Heart right ventricle (tissue), 16 donors: ENCODE measurements at regions of chr18 and their contacts with region 1.

Region 1: GRCh38 chr18:36203360-36203895 is 16.1 kb downstream of the MOCOS start:
- DNase-seq: no peak
- ATAC-seq: no peak
- H3K4me3 ChIP-seq: no peak overlapping the region
- H3K27ac ChIP-seq: no peak overlapping the region
- H3K4me1 ChIP-seq: no peaks in the 10 kb centered on the region
- H3K27me3 ChIP-seq: no peaks in the 10 kb centered on the region
- CTCF ChIP-seq: no peak

Region 2: DNA sequence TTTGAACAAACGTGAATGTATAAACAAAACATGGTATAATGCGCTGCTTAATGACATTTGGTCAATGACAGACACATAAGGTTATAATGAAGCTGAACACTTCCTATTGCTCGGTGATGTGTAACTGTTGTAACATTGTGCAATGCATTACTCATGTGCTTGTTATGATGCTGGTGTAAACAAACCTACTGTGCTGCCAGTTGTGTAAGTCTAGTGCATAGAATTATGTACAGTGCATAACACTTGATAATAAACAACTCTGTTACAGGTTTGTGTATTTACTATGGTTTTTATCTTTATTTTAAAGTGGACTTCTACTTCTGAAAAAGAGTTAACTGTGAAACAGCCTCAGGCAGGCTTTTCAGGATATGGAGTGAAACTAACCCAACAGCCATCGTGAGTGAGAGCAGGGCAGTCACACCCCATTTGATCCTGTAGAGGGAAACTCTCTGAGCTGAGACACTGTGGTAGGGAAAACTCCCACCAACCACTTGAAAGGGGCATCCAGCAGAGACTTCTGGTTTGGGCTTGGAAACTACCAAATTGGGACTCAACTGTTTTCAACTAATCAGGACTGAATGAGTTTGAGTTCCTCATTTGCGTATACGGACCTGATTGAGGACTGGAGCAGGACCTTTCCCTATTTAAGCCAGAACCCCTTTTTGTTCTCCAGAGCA is 127.4 kb before region 1 on chr18:
- intact Hi-C with region 1: no loop called
- DNase-seq: no peak
- ATAC-seq: no peak
- H3K4me3 ChIP-seq: no peak overlapping the region
- H3K27ac ChIP-seq: no peak overlapping the region
- H3K4me1 ChIP-seq: no peaks in the 10 kb centered on the region
- H3K27me3 ChIP-seq: peaks cover 0 to 18% (median 10%) of the 10 kb centered on the region in 7 donors
- CTCF ChIP-seq: no peak

Region 3: DNA sequence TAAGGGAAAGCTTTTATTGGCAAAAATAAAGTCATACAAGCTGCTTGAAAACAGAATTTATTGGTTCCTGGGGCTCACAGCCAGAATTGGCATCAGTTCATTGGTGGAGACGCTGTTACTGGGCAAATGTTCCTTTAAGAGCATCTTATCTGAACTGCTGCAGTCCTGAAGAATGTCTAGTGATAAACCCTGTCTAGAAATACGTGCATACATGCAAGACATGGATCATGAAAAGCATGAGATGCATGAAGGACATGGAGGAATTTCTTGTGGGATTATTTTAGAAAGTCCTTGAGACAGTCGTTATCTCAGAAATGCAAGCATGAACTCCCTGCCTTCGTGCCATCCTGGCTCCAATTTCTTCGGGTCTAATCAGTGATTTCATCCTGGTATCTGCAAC is 61.6 kb after region 1 on chr18:
- intact Hi-C with region 1: loop called in 1 of 10 experiments (anchors 10 kb)
- DNase-seq: no peak
- ATAC-seq: no peak
- H3K4me3 ChIP-seq: no peak overlapping the region
- H3K27ac ChIP-seq: no peak overlapping the region
- H3K4me1 ChIP-seq: peaks cover 0 to 8% (median 0%) of the 10 kb centered on the region in 9 donors
- H3K27me3 ChIP-seq: no peaks in the 10 kb centered on the region
- CTCF ChIP-seq: no peak